ENCODE measurements at regions of chr15 and their contacts with region 1.

Region 1: DNA sequence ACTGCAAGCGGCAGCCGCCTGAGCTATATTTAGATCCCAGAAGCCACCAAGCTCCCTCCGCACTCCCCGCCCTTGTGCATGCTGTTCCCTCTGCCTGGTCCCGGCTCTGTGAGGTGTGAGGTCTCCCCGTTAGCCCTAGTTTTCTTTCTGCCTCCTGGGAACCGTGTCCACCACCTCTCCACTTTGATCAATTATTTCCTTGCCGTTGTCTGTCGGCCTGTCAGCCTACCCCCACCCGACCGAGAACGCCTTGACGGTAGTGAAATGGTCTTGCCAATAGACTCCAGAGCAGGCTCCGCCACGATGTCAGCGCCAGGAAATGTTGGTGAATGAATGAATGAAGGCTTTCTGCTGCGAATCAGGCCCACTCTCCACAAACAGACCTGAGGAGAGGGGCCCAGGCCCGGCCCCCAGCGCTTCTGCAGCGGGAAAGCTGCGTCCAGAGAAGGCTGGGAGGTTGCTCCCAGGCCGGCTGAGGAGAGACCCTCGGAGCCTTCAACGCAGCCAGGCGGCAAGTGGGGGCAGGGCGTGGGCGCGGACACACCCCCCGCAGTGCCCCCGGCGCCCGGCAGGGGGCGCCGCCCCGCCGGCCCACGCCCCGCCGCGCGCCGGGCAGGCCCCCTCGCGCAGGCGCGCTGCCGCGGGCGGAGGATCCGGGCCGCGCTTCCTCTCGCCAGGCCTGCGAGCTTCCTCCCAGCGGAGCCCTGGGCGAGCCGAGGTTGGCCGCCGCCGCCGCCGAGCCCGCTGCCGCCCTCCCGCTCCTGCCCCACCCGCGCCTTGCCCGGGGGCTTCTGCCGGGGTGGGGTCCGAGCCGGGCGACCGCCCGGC is at the start of gene CSK:
- DNase-seq: peak; percentile 88
- ATAC-seq: peak; percentile 64
- total RNA-seq, gene CSK: 41.8 TPM

Region 2: GRCh38 chr15:74799856-74800547 is 18.4 kb after region 1 on chr15:
- intact Hi-C with region 1: loop called (anchors 1 kb)
- DNase-seq: peak; percentile 95
- ATAC-seq: peak; percentile 88

Region 3: DNA sequence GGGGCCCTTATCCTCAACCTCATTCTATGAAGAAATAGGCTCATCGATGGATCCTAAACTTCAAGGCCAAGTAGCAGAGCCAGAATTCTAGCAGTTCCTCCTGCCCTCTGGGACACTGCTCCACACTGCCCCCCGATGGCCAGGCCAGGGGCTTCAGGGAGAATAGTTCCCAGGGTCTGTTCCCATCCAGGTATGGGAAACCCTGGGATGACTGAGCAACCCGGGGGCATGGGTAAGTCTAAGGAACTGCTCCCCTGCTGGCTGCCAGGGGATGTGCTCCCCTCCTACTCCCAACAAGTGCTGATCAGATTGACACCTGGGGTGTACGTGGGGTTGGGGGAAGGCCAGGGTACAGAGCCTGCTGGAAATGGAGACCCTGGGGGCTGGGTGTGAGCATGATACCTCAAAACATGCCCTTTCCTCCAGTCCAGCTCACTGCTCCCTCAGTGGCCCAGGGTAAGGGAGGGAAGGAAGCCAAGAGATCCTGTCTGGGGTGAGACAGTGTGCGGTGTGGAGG is 53.7 kb after region 1 on chr15:
- intact Hi-C with region 1: loop called (anchors 5 kb)
- DNase-seq: peak; percentile 81
- ATAC-seq: no peak

Measured in Right ventricle myocardium inferior (tissue), 1 donor.